Right cardiac atrium (tissue), 5 donors: ENCODE measurements at regions of chr14 and their contacts with region 1.

Region 1: DNA sequence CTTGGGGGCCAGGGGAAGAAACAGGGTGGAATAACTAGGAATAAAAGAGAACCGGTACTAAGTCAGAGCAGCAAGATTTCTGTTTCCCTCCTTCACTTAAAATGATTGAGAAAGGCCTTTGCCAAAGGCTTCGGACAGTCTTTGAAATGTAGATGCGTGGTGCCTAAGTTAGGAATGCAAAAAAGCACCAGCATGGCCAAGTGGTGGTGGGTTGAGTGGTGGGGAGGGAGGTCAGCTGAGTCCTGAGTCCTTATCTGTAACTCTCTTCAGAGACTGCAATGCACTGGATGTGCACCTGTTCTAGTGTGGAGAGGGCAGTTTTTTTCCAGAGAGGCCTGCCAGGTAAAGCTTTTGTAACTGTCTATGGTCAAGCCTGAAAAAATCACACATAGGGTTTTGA is 919.9 kb downstream of the FSCB start:
- DNase-seq: no peak
- ATAC-seq: no peak
- H3K4me3 ChIP-seq: no peak overlapping the region
- H3K27ac ChIP-seq: no peak overlapping the region
- H3K4me1 ChIP-seq: no peaks in the 10 kb centered on the region
- H3K27me3 ChIP-seq: no peaks in the 10 kb centered on the region

Region 2: GRCh38 chr14:43568022-43568421 is 19.2 kb before region 1 on chr14:
- intact Hi-C with region 1: loop called in 1 of 4 experiments (anchors 2 kb)
- DNase-seq: no peak
- ATAC-seq: no peak
- H3K4me3 ChIP-seq: no peak overlapping the region
- H3K27ac ChIP-seq: no peak overlapping the region
- H3K4me1 ChIP-seq: no peaks in the 10 kb centered on the region
- H3K27me3 ChIP-seq: no peaks in the 10 kb centered on the region

Region 3: DNA sequence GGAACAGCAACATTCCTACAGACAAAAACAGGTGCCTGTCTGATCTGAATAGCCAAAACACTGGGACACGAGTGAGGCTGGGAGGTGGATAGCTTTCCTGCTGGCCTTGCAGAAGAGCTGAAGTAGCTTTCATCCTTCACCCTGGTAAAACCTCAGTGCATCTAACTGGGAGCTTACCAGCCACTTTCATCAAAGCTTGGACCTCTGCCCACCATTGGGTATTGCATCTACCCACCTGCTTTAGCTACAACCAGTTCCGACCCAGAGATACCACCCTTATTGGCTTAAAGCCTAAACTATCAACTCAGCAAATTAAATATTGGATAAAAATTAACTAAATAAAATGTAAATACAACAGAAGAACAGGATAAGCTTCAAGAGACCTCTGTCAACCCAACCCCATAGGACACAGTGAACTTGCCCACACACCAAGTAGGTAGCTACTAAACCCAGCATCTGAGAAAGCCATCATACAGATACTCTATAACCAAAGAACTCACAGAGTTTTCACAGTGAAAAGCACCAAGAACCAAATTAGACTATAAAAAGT is 53.6 kb after region 1 on chr14:
- intact Hi-C with region 1: no loop called
- DNase-seq: no peak
- ATAC-seq: no peak
- H3K4me3 ChIP-seq: no peak overlapping the region
- H3K27ac ChIP-seq: no peak overlapping the region
- H3K4me1 ChIP-seq: no peaks in the 10 kb centered on the region
- H3K27me3 ChIP-seq: no peaks in the 10 kb centered on the region

Region 4: GRCh38 chr14:43765474-43765873 is 178.3 kb after region 1 on chr14:
- intact Hi-C with region 1: no loop called
- DNase-seq: no peak
- ATAC-seq: no peak
- H3K4me3 ChIP-seq: no peak overlapping the region
- H3K27ac ChIP-seq: no peak overlapping the region
- H3K4me1 ChIP-seq: no peaks in the 10 kb centered on the region
- H3K27me3 ChIP-seq: no peaks in the 10 kb centered on the region